Activated B cell treated with CpG ODN at 0.5 μM for 24 hours (primary cell): ENCODE measurements at regions of chr1 and their contacts with region 1.

Region 1: DNA sequence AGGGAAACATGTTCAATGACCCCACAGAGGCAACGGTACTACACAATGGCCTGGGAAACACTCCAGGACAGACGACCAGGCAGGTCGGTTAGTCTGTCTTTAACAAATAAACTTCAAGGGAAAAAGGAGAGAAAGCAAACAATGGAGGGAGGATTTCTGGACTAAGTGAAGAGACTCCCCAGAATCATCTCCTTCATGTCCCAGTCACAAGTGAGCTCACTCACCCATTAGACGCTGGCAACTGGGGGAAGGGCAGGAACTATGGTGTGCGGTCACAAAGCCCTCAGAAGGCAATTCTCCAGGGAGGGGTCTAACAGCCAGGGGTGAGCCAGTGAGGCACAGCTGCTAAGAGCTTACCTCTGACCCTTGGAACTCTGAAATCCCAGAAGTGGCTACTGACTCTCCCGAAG is 55.7 kb upstream of the NADK start:
- DNase-seq: peak; percentile 48
- ATAC-seq: peak; percentile 92
- H3K4me3 Mint-ChIP-seq: peak overlapping the region; percentile 74
- H3K27ac Mint-ChIP-seq: peak overlapping the region; percentile 83
- H3K4me1 Mint-ChIP-seq: peaks cover 57% of the 10 kb centered on the region
- H3K27me3 Mint-ChIP-seq: no peaks in the 10 kb centered on the region
- CTCF ChIP-seq: no peak

Region 2: DNA sequence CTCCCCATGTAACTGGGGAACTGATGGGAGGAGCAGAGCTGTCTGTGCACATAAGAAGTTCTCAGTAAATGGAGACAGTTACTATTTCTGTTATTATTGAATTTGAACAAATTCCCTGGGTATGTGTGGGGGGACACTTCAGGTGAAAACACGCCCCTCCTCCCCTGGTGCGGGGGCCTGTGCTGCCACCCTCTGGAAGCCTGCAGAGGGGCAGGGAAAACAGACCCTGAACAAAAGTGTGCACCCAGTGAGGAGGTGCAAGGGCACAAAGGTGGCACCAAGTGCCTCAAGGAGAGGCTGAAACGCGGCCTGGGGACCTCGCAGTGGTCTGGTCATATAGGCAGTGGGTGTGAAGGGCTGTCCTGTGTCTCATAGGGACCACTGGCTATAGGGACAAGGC is 37.5 kb before region 1 on chr1:
- CTCF ChIA-PET with region 1: no interaction called
- POLR2A ChIA-PET with region 1: interaction called, 8 read pairs
- intact Hi-C with region 1: loop called (anchors 5 kb)
- DNase-seq: no peak
- ATAC-seq: no peak
- H3K4me3 Mint-ChIP-seq: peak overlapping the region; percentile 30
- H3K27ac Mint-ChIP-seq: no peak overlapping the region
- H3K4me1 Mint-ChIP-seq: peaks cover 48% of the 10 kb centered on the region
- H3K27me3 Mint-ChIP-seq: no peaks in the 10 kb centered on the region
- CTCF ChIP-seq: no peak

Region 3: DNA sequence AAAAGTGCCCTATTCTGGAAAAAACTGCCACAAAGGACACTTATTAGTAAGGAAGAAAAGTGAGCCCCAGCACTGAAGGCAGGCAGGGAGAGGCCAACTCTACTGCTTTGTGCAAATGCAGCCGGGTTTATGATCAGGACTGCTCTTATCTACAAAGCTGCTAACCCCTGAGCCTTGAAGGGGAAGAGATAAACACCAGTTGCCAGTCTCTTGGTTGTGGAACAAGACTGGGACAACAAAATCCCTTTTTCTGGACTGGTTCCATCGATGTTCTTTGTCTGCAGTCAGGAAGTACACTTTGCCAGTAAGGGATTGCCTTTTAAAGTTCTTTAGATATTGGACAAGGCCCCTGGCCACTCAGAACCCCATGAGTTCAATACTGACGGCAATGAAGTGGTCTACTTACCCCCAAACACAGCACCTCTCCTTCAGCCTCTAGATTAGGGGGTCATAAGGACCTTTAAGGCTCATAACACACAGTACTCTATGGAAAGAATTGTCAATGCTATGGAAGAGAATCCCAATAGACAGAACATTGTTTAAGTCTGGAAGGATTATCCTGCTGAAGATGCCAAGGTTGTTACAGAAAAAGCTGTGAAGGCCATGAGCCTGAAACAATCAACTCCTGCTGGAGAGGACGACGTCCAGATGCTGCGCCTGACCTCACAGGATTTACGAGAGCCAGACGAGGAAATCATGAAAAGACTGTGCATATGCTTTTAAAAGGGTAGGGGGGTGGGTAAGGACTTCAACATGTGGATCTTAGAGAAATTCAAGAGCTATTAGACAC is 13.3 kb after region 1 on chr1:
- CTCF ChIA-PET with region 1: no interaction called
- POLR2A ChIA-PET with region 1: interaction called, 5 read pairs
- intact Hi-C with region 1: loop called (anchors 2 kb)
- DNase-seq: no peak
- ATAC-seq: no peak
- H3K4me3 Mint-ChIP-seq: peak overlapping the region; percentile 38
- H3K27ac Mint-ChIP-seq: peak overlapping the region; percentile 79
- H3K4me1 Mint-ChIP-seq: peaks cover 74% of the 10 kb centered on the region
- H3K27me3 Mint-ChIP-seq: no peaks in the 10 kb centered on the region
- CTCF ChIP-seq: no peak

Region 4: GRCh38 chr1:1890506-1891348 is 56.8 kb after region 1 on chr1 and contains the start of gene GNB1:
- CTCF ChIA-PET with region 1: no interaction called
- POLR2A ChIA-PET with region 1: interaction called, 4 read pairs
- intact Hi-C with region 1: loop called (anchors 2 kb)
- DNase-seq: peak; percentile 96
- ATAC-seq: peak; percentile 59
- H3K4me3 Mint-ChIP-seq: peak within 1 kb of the TSS; percentile 86
- H3K27ac Mint-ChIP-seq: peak within 1 kb of the TSS; percentile 95
- H3K4me1 Mint-ChIP-seq: peaks cover 66% of the 10 kb centered on the region
- H3K27me3 Mint-ChIP-seq: no peaks in the 10 kb centered on the region
- CTCF ChIP-seq: no peak
- total RNA-seq, gene GNB1: 266 and 302 TPM in 2 replicates

Region 5: GRCh38 chr1:2133039-2133878 is 299.3 kb after region 1 on chr1:
- CTCF ChIA-PET with region 1: no interaction called
- POLR2A ChIA-PET with region 1: no interaction called
- intact Hi-C with region 1: no loop called
- DNase-seq: peak; percentile 97
- ATAC-seq: peak; percentile 90
- H3K4me3 Mint-ChIP-seq: peak overlapping the region; percentile 80
- H3K27ac Mint-ChIP-seq: peak overlapping the region; percentile 75
- H3K4me1 Mint-ChIP-seq: peaks cover 14% of the 10 kb centered on the region
- H3K27me3 Mint-ChIP-seq: no peaks in the 10 kb centered on the region
- CTCF ChIP-seq: no peak